Activated naive CD4-positive, alpha-beta T cell treated with anti-CD3 and anti-CD28 coated beads for 36 hours (primary cell): ENCODE measurements at regions of chr2 and their contacts with region 1.

Region 1: DNA sequence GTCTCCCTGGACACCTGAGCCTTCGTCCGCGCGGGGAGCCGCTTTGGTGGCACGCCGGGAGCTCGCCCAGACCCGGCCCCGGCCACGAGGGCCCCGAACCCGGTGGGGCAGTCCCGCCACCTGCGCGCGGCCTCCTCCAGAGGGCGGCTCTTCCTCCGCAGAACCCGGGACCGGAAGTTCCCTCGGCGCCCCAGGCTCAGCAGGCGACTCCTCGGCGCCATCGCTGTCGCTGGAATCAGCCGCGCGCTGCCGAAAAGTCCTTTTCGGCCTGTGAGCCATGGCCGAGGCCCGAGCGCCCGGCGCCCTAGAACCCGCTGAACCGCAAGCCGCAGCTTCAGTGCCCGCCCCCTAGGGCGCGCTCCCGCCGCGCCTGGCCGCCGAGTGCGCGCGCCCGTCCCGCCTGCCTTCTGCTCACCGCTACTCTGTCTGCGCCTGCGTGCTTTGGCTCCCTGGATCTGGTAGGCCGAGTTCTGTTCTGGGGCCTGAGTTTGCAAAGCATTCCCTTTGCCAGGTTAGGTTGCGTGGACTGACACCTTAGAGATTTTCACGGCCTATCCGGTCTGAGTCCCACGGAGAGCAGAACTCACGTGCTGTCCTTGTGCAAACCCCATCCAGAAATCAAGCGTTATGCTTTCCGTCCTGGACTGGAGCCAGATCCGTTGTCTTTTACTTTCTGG is at the start of gene GCFC2:
- DNase-seq: peak; percentile 87
- H3K4me3 Mint-ChIP-seq: peak within 1 kb of the TSS; percentile 91
- H3K27ac Mint-ChIP-seq: peak within 1 kb of the TSS; percentile 97
- H3K4me1 Mint-ChIP-seq: peaks cover 28% of the 10 kb centered on the region
- H3K27me3 Mint-ChIP-seq: no peaks in the 10 kb centered on the region
- total RNA-seq, gene GCFC2: 30.5 to 36.4 TPM

Region 2: DNA sequence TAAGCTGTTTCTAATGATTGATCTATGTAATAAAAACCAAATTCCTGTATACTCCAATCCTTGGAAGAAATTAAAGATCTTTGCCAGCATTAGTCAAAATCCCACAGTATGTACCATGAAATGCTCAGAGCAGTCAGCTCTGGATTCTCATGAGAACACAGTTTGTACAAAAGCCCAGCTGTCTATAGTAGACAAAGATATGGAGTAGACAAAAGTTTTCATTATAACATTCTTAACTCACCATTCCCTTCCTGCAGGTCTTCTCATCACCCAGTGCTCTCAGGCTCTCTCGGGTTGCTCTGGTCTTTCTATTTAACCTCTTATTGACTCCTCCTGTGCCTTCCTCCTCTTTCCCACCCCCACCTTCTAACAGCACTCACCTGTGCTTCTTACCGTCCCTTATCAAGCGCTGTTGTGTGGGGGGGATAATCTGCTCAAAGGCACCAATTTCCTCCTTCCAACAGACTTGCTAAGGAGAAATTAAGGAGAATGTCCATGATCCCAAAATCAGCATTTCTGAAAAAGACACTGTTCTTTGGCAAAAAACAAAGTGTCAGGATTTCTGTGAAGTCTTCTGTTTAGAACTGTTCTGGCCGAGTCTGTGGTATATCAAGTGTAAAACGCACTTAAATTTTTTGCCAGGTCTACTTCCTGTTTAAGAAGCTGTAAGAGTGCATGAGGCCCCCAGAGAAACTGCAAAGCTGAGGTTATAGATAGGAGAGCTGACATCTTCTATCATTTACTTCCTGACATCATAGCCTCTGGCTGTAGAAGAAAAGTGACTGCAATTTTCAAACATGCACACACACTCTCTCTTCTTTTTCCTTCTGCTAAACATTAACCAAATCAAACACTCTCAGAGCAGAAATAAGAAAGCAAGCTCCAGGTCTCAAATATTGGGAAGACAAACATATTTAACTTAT is 294.0 kb before region 1 on chr2:
- CTCF ChIA-PET with region 1: no interaction called
- intact Hi-C with region 1: loop called (anchors 5 kb)
- DNase-seq: peak; percentile 14
- H3K4me3 Mint-ChIP-seq: peak overlapping the region; percentile 74
- H3K27ac Mint-ChIP-seq: peak overlapping the region; percentile 71
- H3K4me1 Mint-ChIP-seq: peaks cover 26% of the 10 kb centered on the region
- H3K27me3 Mint-ChIP-seq: no peaks in the 10 kb centered on the region

Region 3: GRCh38 chr2:75560768-75561565 is 149.7 kb before region 1 on chr2 and contains the start of gene EVA1A:
- CTCF ChIA-PET with region 1: no interaction called
- intact Hi-C with region 1: no loop called
- DNase-seq: peak; percentile 37
- H3K4me3 Mint-ChIP-seq: peak within 1 kb of the TSS; percentile 77
- H3K27ac Mint-ChIP-seq: no peak within 1 kb of the TSS
- H3K4me1 Mint-ChIP-seq: peaks cover 13% of the 10 kb centered on the region
- H3K27me3 Mint-ChIP-seq: peaks cover 36% of the 10 kb centered on the region
- total RNA-seq, gene EVA1A: not detected

Region 4: GRCh38 chr2:75646583-75647425 is 63.9 kb before region 1 on chr2 and contains the start of gene MRPL19:
- CTCF ChIA-PET with region 1: interaction called, 4 read pairs
- intact Hi-C with region 1: loop called (anchors 1 kb)
- DNase-seq: peak; percentile 86
- H3K4me3 Mint-ChIP-seq: peak within 1 kb of the TSS; percentile 90
- H3K27ac Mint-ChIP-seq: peak within 1 kb of the TSS; percentile 88
- H3K4me1 Mint-ChIP-seq: peaks cover 28% of the 10 kb centered on the region
- H3K27me3 Mint-ChIP-seq: no peaks in the 10 kb centered on the region
- total RNA-seq, gene MRPL19: 70.3 to 71.7 TPM